Aorta (tissue), 5 donors: ENCODE measurements at regions of chr5 and their contacts with region 1.

Region 1: GRCh38 chr5:43191740-43192557 is at the start of gene NIM1K:
- DNase-seq: peak; percentile 68 to 86
- ATAC-seq: peak; percentile 83
- H3K4me3 ChIP-seq: peak within 1 kb of the TSS; percentile 31 to 34
- H3K27ac ChIP-seq: no peak within 1 kb of the TSS
- H3K4me1 ChIP-seq: no peaks in the 10 kb centered on the region
- H3K27me3 ChIP-seq: no peaks in the 10 kb centered on the region
- total RNA-seq, gene NIM1K: 0.58 to 1.5 TPM

Region 2: GRCh38 chr5:43120720-43121564 is 71.0 kb before region 1 on chr5 and contains the start of gene ZNF131:
- intact Hi-C with region 1: loop called in 1 of 2 experiments (anchors 5 kb)
- DNase-seq: peak; percentile 97 to 99
- ATAC-seq: peak; percentile 100
- H3K4me3 ChIP-seq: peak within 1 kb of the TSS; percentile 82 to 83
- H3K27ac ChIP-seq: peak within 1 kb of the TSS; percentile 83 to 92
- H3K4me1 ChIP-seq: no peaks in the 10 kb centered on the region
- H3K27me3 ChIP-seq: no peaks in the 10 kb centered on the region
- total RNA-seq, gene ZNF131: 36.6 to 45.0 TPM